GM10248 (cell line): ENCODE measurements at regions of chr6 and their contacts with region 1.

Region 1: GRCh38 chr6:28355743-28356665 is 6.3 kb downstream of the ZKSCAN3 start:
- DNase-seq: peak; percentile 71
- CTCF ChIP-seq: peak; percentile 81

Region 2: DNA sequence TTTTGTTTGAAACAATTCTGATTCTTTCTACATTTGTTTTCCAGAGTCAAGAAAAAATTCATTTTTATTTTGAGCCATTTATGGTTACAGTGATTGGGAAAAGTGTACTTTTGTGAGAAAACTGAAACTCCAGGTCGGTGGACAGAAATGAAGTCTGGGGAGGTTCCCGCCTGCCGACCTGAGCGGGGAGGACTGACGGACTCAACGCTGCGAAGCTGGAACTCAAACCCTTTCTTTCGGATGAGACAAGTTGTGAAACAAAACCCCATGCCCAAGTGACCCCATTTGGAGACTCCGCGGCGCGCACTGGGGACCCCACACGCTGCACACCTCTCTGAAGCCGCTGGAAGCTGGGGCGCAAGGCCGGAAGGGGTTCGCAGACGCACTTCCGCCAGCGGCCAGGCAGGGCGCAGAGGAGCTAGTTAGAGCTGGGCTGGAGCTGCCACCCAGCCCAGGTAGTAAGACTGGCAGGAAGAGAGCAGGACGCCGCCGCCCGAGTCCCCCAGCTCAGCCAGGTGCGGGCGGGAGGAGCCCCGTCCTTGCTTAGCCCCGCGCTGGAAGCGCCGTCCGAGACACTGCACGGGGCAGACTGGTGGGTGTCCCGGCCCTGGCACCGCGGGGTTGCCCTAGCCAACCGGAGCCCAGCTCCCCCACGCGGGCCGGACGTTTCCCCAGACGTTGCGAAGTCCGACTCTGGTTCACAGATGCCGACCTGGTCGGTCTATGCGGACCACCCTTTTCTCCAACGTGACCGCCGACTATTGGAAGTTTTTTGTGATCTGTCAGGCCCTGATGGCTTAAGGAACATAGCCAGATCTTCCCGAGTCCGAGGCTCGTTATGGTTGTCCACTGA is 251.4 kb before region 1 on chr6:
- CTCF ChIA-PET with region 1: interaction called, 14 read pairs
- POLR2A ChIA-PET with region 1: no interaction called
- DNase-seq: peak; percentile 92
- CTCF ChIP-seq: peak; percentile 50

Region 3: GRCh38 chr6:28136585-28137504 is 219.2 kb before region 1 on chr6:
- CTCF ChIA-PET with region 1: interaction called, 17 read pairs
- POLR2A ChIA-PET with region 1: no interaction called
- DNase-seq: peak; percentile 78
- CTCF ChIP-seq: no peak

Region 4: DNA sequence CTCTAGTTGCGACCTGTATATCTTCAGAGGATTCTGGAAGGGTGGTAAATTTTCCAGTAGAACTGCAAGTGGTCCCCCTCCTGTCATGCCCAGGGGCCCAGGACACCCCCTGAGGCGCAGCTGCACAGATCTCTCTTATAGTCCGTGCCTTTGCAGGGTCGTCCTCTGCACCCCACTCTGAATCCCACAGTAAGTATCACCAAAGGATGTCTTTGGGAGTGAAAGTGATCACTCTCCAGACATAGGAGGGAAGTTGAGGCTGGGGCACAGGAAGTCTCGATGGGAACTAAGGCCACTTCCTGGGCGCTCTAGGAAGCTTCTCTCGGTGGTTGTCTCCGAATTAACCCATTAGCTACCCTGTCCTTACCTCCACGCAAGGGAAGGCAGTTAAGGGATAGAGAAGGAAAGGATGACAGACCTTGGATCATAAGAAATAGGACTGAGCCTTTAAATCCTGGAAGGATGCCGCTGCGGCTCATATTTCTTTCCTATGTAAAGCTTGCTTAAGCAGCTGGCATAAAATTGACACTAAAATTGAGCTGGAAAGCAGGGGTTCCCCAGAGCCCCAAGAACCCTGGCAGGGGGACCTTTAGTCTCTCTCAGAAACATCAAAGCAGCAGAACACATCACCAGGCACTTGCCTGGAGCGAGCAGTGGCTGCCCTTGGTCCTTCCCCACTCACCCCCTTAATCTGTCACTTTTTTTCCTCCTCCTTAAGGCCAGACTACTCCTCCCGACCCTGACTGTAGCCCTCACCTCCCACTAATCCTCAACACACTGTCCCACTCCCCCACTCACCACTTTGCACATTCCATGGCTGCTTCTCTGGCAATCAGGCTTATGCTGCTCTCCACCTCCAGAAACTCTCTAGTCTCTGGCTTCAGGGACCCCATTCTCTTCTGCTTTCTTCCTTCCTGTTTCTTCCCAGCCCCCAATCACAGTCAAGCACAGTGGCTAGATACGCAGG is 103.7 kb before region 1 on chr6 and contains the start of gene ZKSCAN4:
- CTCF ChIA-PET with region 1: interaction called, 15 read pairs
- POLR2A ChIA-PET with region 1: no interaction called
- DNase-seq: peak; percentile 83
- CTCF ChIP-seq: no peak

Region 5: GRCh38 chr6:28335564-28336283 is 20.3 kb before region 1 on chr6 and contains the start of gene ZSCAN31:
- CTCF ChIA-PET with region 1: interaction called, 46 read pairs
- POLR2A ChIA-PET with region 1: interaction called, 4 read pairs
- DNase-seq: peak; percentile 80
- CTCF ChIP-seq: no peak

Region 6: GRCh38 chr6:28383235-28384142 is 27.5 kb after region 1 on chr6:
- CTCF ChIA-PET with region 1: interaction called, 55 read pairs
- POLR2A ChIA-PET with region 1: interaction called, 4 read pairs
- DNase-seq: peak; percentile 84
- CTCF ChIP-seq: peak; percentile 46

Region 7: GRCh38 chr6:28425944-28426541 is 70.0 kb after region 1 on chr6:
- CTCF ChIA-PET with region 1: no interaction called
- POLR2A ChIA-PET with region 1: no interaction called
- DNase-seq: no peak
- CTCF ChIP-seq: no peak